ENCODE measurements at regions of chr6 and their contacts with region 1.

Region 1: DNA sequence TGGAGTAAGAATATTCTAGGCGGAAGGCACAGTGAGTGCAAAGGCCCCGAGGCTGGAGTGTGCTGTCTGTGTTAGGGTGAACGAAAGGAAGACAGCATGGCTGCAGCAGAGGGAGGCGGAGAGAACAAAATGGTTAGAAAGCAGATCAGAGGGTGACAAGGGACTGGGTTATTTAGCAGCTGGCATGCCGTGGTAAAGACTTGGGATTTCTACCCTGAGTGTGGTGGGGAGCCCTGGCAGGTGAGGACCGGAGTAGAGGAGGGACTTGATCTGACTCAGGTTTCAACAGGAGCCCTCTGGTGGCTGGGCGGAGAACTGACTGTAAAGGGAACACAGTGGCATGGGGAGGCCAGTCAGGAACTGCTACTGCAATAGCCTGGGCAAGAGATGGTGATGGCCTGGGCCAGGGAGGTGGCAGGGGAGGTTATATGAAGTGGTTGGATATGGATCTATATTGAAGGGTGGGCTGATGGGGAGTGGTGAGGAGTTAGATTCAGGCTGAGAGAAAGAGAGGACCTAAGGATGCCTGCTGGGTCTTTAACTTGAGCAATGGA is 38.0 kb downstream of the PIM1 start:
- DNase-seq: peak; percentile 95
- ATAC-seq: peak; percentile 73
- H3K4me3 Mint-ChIP-seq: no peak overlapping the region
- H3K27ac Mint-ChIP-seq: peak overlapping the region; percentile 53
- H3K4me1 Mint-ChIP-seq: peaks cover 67% of the 10 kb centered on the region
- H3K27me3 Mint-ChIP-seq: no peaks in the 10 kb centered on the region

Region 2: GRCh38 chr6:36666726-36667591 is 541.0 kb before region 1 on chr6:
- CTCF ChIA-PET with region 1: no interaction called
- POLR2A ChIA-PET with region 1: no interaction called
- intact Hi-C with region 1: no loop called
- DNase-seq: no peak
- ATAC-seq: no peak
- H3K4me3 Mint-ChIP-seq: no peak overlapping the region
- H3K27ac Mint-ChIP-seq: no peak overlapping the region
- H3K4me1 Mint-ChIP-seq: peaks cover 21% of the 10 kb centered on the region
- H3K27me3 Mint-ChIP-seq: peaks cover 3% of the 10 kb centered on the region

Region 3: DNA sequence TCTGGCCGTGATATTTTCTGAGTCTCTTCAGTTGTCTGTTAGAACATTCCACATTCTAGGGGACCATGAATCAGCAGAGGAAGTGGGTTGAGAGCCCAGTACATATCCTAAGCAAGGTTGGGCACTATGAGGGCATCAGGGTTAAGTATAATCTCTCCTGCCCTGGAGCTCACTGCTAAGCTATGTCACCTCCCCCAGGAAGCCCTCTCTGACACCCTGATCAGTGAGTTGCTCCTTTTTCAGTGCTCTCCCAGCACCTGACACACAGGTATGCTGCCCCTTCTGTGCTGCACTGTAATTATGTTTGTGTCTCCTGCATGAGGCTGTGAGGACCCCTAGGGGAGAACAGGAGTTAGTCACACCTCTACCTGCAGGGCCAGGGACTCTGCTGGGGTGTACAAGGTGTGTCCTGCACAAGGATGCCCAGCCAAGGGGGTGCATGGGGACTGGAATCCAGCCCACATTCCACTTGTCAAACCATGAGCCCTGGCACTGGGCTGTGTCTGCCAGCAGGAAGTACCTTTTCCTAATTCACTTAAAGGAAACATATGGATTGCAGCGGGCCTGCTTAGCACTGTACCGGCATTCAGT is 506.5 kb before region 1 on chr6:
- CTCF ChIA-PET with region 1: no interaction called
- POLR2A ChIA-PET with region 1: no interaction called
- intact Hi-C with region 1: no loop called
- DNase-seq: peak; percentile 23
- ATAC-seq: peak; percentile 61
- H3K4me3 Mint-ChIP-seq: no peak overlapping the region
- H3K27ac Mint-ChIP-seq: peak overlapping the region; percentile 4
- H3K4me1 Mint-ChIP-seq: peaks cover 4% of the 10 kb centered on the region
- H3K27me3 Mint-ChIP-seq: no peaks in the 10 kb centered on the region

Region 4: DNA sequence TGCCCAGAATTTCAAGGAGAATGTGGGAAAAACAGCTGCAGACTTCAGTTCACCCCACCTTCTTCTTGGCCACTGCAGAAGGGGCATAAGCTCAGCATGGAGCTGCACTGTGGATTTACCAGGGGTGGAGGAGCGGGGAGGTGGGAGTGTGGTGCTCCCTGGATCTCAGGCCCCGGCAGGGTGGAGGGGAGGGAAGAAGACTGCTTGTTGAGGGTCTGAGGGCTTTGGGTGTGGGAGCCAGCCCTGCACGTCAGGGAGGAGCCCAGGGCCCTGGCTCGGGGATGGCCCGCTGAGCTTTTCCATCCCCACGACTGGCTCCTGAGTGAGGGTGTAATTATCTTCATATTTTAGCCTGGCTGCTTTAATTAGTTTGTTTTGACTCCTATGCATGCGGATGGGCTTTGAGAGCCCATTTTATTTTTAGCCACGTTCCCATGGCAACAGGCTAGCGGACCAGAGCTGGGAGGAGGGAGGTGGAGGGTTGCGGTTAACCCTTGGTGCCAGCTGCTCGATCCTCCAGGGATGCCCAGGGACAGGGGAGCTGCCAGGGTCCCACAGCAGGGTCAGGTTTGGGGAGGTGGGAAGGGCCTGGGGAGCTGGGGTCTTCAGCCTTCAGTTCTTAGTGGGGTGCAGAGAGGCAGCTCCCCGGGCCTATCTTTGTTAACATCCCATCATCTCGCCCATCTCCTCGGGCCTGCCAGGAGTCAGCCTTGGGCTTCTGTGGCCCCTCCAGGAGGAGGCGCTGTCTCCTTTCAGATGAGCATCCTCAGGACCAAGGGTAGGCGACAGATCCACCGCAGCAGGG is 442.2 kb before region 1 on chr6:
- CTCF ChIA-PET with region 1: interaction called, 6 read pairs
- POLR2A ChIA-PET with region 1: no interaction called
- intact Hi-C with region 1: loop called (anchors 1 to 10 kb)
- DNase-seq: peak; percentile 92
- ATAC-seq: peak; percentile 92
- H3K4me3 Mint-ChIP-seq: no peak overlapping the region
- H3K27ac Mint-ChIP-seq: no peak overlapping the region
- H3K4me1 Mint-ChIP-seq: peaks cover 26% of the 10 kb centered on the region
- H3K27me3 Mint-ChIP-seq: no peaks in the 10 kb centered on the region

Region 5: GRCh38 chr6:36839749-36840431 is 368.1 kb before region 1 on chr6:
- CTCF ChIA-PET with region 1: no interaction called
- POLR2A ChIA-PET with region 1: no interaction called
- intact Hi-C with region 1: no loop called
- DNase-seq: peak; percentile 65
- ATAC-seq: peak; percentile 72
- H3K4me3 Mint-ChIP-seq: peak overlapping the region; percentile 62
- H3K27ac Mint-ChIP-seq: peak overlapping the region; percentile 48
- H3K4me1 Mint-ChIP-seq: peaks cover 10% of the 10 kb centered on the region
- H3K27me3 Mint-ChIP-seq: peaks cover 24% of the 10 kb centered on the region

Region 6: GRCh38 chr6:36885461-36886401 is 322.2 kb before region 1 on chr6 and contains the start of gene C6orf89:
- CTCF ChIA-PET with region 1: interaction called, 10 read pairs
- POLR2A ChIA-PET with region 1: no interaction called
- intact Hi-C with region 1: loop called (anchors 1 kb)
- DNase-seq: peak; percentile 99
- ATAC-seq: peak; percentile 100
- H3K4me3 Mint-ChIP-seq: peak within 1 kb of the TSS; percentile 89
- H3K27ac Mint-ChIP-seq: peak within 1 kb of the TSS; percentile 97
- H3K4me1 Mint-ChIP-seq: peaks cover 31% of the 10 kb centered on the region
- H3K27me3 Mint-ChIP-seq: no peaks in the 10 kb centered on the region
- total RNA-seq, gene C6orf89: 29.5 to 36.2 TPM

Region 7: GRCh38 chr6:37051138-37052026 is 156.6 kb before region 1 on chr6:
- CTCF ChIA-PET with region 1: interaction called, 66 read pairs
- POLR2A ChIA-PET with region 1: interaction called, 5 read pairs
- intact Hi-C with region 1: loop called (anchors 1 kb)
- DNase-seq: peak; percentile 95
- ATAC-seq: peak; percentile 43
- H3K4me3 Mint-ChIP-seq: peak overlapping the region; percentile 79
- H3K27ac Mint-ChIP-seq: peak overlapping the region; percentile 100
- H3K4me1 Mint-ChIP-seq: peaks cover 55% of the 10 kb centered on the region
- H3K27me3 Mint-ChIP-seq: no peaks in the 10 kb centered on the region

Region 8: GRCh38 chr6:37182736-37183590 is 25.0 kb before region 1 on chr6:
- CTCF ChIA-PET with region 1: interaction called, 240 read pairs
- POLR2A ChIA-PET with region 1: interaction called, 3 read pairs
- intact Hi-C with region 1: no loop called
- DNase-seq: peak; percentile 77
- ATAC-seq: peak; percentile 91
- H3K4me3 Mint-ChIP-seq: peak overlapping the region; percentile 26
- H3K27ac Mint-ChIP-seq: peak overlapping the region; percentile 97
- H3K4me1 Mint-ChIP-seq: peaks cover 44% of the 10 kb centered on the region
- H3K27me3 Mint-ChIP-seq: no peaks in the 10 kb centered on the region

Region 9: DNA sequence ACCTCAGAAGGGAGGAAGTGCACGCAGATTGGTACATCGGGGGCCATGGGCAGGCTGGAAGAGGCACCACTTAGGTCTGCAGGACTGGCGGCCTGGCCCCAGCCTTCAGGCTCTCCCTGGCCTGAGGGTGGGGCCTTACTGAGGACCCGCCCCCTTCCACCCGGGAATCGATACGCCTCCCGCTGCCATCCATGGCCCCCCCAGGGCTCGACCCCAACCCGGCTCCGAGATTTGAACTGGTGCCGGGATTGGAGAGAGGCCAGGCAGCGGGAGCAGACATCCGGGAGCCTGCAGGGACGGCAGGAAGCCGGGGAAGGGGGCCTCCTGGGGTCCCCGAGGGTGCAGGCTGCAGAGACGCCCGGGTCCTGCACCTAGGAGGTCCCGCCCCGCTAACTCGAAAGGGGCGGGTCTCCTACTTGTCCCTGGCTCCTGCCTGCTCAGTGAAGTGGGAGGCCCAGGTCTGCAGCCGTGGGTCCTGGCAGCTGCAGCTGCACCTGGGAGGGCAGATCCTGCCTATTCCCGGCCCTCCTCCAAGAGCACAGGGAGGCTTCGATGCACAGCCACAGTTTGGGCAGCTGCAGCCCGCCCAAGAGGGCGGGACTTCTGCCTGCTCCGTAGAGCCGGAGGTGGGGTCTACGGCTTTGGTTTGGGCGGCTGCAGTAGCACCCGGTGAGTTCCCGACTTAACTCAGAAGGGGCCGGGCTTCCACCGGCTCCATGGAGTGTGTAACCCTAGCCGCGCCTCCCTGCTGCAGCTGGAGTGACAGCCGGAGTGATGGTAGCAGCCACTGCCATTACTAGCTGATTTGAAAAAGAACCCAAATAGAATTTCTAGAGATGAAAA is 14.4 kb after region 1 on chr6:
- CTCF ChIA-PET with region 1: interaction called, 24 read pairs
- POLR2A ChIA-PET with region 1: interaction called, 3 read pairs
- intact Hi-C with region 1: no loop called
- DNase-seq: peak; percentile 89
- ATAC-seq: peak; percentile 99
- H3K4me3 Mint-ChIP-seq: peak overlapping the region; percentile 67
- H3K27ac Mint-ChIP-seq: peak overlapping the region; percentile 63
- H3K4me1 Mint-ChIP-seq: peaks cover 15% of the 10 kb centered on the region
- H3K27me3 Mint-ChIP-seq: no peaks in the 10 kb centered on the region

Region 10: DNA sequence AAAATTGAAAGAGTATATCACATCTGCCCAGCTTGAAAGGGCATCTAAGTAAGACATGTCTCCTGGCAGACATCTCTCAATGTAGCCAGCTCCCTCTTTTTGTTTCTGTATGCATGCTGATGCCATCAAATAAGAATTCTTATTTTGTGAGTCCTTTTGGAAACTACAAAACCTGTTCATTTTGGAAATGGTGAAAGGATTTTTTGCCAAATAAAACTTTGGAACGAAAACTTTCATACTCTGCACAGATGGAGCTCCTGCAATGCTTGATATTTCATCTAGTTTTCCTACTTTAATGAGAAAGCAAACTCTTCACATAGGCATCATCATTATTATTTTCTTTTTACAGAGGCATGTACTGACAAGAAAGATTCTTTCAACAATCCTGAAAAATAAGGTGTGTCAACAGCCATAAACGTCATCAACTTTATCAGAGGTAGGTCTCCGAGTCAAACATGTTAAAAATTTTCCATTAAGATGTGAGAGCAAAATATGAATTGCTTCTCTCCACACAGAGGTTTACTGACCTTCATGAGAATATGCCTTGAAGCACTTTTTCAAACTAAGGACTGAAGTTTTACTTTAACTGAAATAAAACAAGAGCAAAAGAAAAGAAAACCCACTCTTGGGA is 198.9 kb after region 1 on chr6:
- CTCF ChIA-PET with region 1: no interaction called
- POLR2A ChIA-PET with region 1: no interaction called
- intact Hi-C with region 1: no loop called
- DNase-seq: no peak
- ATAC-seq: no peak
- H3K4me3 Mint-ChIP-seq: no peak overlapping the region
- H3K27ac Mint-ChIP-seq: no peak overlapping the region
- H3K4me1 Mint-ChIP-seq: no peaks in the 10 kb centered on the region
- H3K27me3 Mint-ChIP-seq: no peaks in the 10 kb centered on the region